Left ventricle myocardium superior (tissue), 1 donor: ENCODE measurements at regions of chrX and their contacts with region 1.

Region 1: GRCh38 chrX:102950908-102951866 is 14.1 kb downstream of the RAB40AL start:
- DNase-seq: peak; percentile 33
- ATAC-seq: peak; percentile 55

Region 2: DNA sequence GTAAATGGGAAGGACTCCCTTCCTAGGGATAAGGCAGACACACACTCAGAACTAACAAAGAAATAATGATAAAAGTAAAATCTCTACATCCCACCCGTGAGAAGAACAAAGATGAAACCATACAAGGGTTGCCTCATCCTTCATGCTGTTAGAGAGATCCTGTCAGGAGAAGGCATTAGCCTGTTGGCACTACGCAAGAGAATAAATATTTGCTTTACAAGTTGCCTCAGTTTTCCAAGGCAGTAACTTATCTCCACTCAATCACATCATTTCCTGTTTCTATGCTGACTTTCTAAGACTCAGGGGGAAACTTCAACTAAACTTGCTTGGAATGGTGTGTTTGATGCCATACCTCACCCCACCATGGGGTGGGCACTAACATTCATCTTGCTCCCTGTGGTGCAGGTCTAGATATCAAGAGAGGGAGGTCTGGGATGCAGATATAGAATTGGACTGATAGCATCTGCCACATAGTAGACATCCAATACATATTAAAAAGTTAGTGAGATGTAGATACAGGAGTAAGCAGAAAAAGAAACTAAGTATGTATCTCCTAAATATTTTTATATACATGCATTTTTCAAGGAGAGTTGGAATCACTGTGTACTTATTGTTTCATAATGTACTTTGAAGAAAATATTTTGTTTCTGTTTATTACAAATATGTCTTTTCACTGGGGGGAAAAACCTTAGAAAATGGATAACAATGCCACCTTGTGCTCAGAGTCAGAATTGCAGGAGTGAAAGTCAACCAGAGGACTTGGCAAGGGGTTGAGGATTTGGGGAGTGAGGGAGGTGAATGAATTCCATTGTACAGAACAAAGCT is 206.5 kb after region 1 on chrX:
- intact Hi-C with region 1: loop called (anchors 10 kb)
- DNase-seq: no peak
- ATAC-seq: no peak

Region 3: GRCh38 chrX:103329991-103330390 is 378.8 kb after region 1 on chrX and contains the start of gene TCEAL7:
- intact Hi-C with region 1: no loop called
- DNase-seq: peak; percentile 26
- ATAC-seq: peak; percentile 88
- total RNA-seq, gene TCEAL7: 4.0 TPM

Region 4: DNA sequence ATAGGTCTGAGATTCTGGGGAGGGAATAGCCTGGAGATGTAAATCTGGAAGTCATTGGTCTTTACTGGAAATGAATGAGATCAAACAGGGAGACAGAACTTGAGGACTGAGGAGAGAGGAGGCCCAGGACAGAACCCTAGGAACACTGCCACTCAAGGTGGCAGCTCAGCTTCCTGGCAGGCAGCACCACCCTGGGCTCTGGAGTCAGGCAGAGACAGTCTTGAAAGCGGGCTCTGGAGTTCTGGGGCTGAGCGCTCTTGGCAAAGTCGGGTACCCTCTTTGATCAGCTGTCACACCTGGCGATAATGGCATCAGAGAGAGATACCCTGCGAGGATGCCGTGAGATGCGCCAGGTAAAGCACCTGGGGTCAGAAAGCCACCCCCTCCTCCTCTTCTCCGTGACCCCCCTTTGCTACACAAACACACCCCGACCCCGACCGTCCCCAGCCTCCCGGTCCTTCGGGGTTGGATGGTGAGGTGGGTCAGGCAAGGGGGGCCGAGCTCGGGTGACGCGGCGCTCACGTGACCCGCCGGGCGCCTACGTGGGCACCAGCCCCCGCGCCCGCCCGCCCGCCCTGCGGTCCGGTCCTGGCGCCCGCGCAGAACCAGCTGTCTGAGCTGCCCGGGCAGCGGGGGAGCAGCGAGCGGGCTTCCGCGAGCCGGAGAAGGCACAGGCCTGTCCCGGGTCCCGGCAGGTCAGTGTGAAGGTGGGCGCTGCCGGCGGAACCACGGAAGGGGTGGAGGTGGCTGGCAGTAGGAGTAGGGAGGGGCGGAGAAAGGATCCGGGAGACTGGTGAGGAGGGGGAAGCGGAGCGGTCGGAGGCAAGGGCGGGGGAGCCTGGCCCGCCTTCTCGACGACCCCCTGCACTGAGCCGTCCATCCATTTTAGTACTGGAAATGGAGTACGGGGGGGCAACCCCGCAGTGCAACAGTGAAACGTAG is 656.4 kb after region 1 on chrX and contains the start of gene TCEAL3:
- intact Hi-C with region 1: no loop called
- DNase-seq: peak; percentile 74
- ATAC-seq: peak; percentile 96
- total RNA-seq, gene TCEAL3: 24.5 TPM